Activated CD4-positive, alpha-beta T cell treated with anti-CD3 and anti-CD28 coated beads for 36 hours (primary cell): ENCODE measurements at regions of chr3 and their contacts with region 1.

Region 1: DNA sequence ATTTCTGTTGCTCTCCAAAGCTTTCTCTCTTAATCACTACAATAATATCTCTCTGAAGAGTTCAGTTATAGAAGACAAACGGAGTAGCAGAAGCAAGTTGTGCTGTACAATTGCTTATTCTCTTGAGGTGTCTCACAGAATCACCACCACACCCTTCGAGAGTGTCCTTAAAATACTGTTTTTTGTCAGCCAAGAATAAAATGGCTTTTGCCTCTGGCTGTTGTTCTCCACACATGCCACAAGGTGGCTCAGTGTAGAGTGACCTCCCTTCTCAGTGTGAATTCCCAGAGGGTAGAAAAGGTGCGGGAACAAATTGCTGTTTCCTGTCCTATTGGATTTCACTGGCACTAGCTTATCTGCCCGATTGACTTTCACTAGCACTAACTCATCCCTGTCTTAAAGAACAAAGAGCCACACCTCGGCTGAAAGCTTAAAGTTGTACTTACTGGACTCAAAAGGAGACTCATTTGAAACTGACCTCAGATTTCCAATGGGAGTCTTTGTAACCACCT is 134.2 kb upstream of the SATB1 start:
- DNase-seq: peak; percentile 50
- ATAC-seq: peak; percentile 57
- H3K4me3 Mint-ChIP-seq: peak overlapping the region; percentile 53
- H3K27ac Mint-ChIP-seq: peak overlapping the region; percentile 97
- H3K4me1 Mint-ChIP-seq: peaks cover 74% of the 10 kb centered on the region
- H3K27me3 Mint-ChIP-seq: no peaks in the 10 kb centered on the region

Region 2: GRCh38 chr3:17742108-17742879 is 817.1 kb before region 1 on chr3 and contains the start of gene TBC1D5:
- CTCF ChIA-PET with region 1: no interaction called
- POLR2A ChIA-PET with region 1: no interaction called
- intact Hi-C with region 1: loop called in 1 of 2 experiments (anchors 5 kb)
- DNase-seq: peak; percentile 97
- ATAC-seq: peak; percentile 97
- H3K4me3 Mint-ChIP-seq: peak within 1 kb of the TSS; percentile 93
- H3K27ac Mint-ChIP-seq: peak within 1 kb of the TSS; percentile 93
- H3K4me1 Mint-ChIP-seq: peaks cover 40% of the 10 kb centered on the region
- H3K27me3 Mint-ChIP-seq: no peaks in the 10 kb centered on the region
- total RNA-seq, gene TBC1D5: 53.9 to 56.9 TPM

Region 3: GRCh38 chr3:18307529-18307928 is 251.9 kb before region 1 on chr3:
- CTCF ChIA-PET with region 1: no interaction called
- POLR2A ChIA-PET with region 1: no interaction called
- intact Hi-C with region 1: no loop called
- DNase-seq: no peak
- ATAC-seq: no peak
- H3K4me3 Mint-ChIP-seq: no peak overlapping the region
- H3K27ac Mint-ChIP-seq: no peak overlapping the region
- H3K4me1 Mint-ChIP-seq: no peaks in the 10 kb centered on the region
- H3K27me3 Mint-ChIP-seq: no peaks in the 10 kb centered on the region

Region 4: DNA sequence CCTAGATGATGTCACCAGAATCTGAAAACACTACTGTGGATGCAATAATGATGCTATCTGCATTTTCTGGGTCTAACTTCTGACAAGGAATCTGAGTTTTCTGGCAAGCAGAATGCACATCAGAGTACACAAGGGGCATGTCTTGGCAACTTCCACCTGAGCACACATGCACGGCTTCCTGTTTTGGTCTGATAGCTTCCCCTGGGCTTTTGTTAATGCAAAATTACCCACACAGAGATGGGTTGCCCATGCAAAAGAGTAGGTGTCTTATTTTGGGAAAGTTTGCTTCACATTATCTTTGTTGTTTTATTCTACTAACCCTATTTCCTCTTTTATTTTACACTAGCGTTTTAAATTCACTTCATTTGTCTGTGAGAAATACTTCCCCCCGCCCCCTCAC is 60.1 kb before region 1 on chr3:
- CTCF ChIA-PET with region 1: no interaction called
- POLR2A ChIA-PET with region 1: no interaction called
- intact Hi-C with region 1: loop called (anchors 2 to 10 kb)
- DNase-seq: peak; percentile 15
- ATAC-seq: peak; percentile 51
- H3K4me3 Mint-ChIP-seq: peak overlapping the region; percentile 24
- H3K27ac Mint-ChIP-seq: peak overlapping the region; percentile 69
- H3K4me1 Mint-ChIP-seq: peaks cover 46% of the 10 kb centered on the region
- H3K27me3 Mint-ChIP-seq: no peaks in the 10 kb centered on the region

Region 5: GRCh38 chr3:18657858-18658820 is 98.8 kb after region 1 on chr3:
- CTCF ChIA-PET with region 1: interaction called, 4 read pairs
- POLR2A ChIA-PET with region 1: no interaction called
- intact Hi-C with region 1: loop called in 1 of 2 experiments (anchors 1 kb)
- DNase-seq: peak; percentile 51
- ATAC-seq: peak; percentile 71
- H3K4me3 Mint-ChIP-seq: peak overlapping the region; percentile 52
- H3K27ac Mint-ChIP-seq: peak overlapping the region; percentile 85
- H3K4me1 Mint-ChIP-seq: peaks cover 70% of the 10 kb centered on the region
- H3K27me3 Mint-ChIP-seq: no peaks in the 10 kb centered on the region

Region 6: DNA sequence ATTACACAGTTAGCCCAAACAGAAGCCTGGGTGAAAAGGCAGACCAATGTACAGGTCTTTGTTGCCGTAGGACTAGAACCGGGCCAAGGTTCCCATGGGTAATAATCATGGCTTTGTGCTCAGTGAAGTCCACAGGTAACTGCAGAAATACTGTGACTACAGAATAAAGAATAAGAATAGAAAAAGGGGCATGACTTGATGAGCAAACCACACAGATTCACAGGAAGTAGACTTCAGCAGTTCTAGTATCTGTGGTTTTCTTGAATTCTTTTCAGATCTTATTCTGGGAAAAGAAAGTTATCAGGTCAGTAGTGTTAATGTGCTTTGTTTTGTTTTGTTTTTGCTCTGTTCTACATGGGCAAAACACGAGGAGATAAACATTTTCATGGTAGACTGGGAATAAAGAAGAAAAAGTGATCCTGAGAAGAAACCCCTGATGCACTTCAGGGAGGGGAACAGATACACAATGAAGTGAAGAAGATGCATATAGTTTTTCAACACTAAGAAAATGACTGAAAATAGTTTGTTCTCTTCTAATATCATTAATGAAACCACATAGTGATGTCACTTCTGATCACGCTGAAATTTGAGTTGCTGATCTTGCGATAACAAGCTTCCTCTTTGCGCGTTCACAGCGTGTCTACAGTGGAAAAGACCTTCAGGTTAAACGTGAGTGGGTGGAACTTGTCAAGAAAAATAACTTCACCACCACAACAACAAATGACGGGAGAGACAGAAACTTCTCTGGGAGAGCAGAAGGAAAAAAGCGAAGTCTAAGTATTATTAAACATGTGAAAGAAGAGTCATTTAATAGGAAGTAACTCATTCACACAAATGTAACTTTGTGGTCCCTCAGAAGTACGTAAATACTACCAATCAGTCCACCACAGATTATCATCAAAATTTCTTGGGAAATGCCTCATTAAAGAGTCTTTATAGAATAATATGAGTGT is 181.5 kb after region 1 on chr3:
- CTCF ChIA-PET with region 1: interaction called, 7 read pairs
- POLR2A ChIA-PET with region 1: interaction called, 15 read pairs
- intact Hi-C with region 1: loop called (anchors 1 kb)
- DNase-seq: peak; percentile 76
- ATAC-seq: peak; percentile 36
- H3K4me3 Mint-ChIP-seq: peak overlapping the region; percentile 58
- H3K27ac Mint-ChIP-seq: peak overlapping the region; percentile 94
- H3K4me1 Mint-ChIP-seq: peaks cover 94% of the 10 kb centered on the region
- H3K27me3 Mint-ChIP-seq: no peaks in the 10 kb centered on the region

Region 7: GRCh38 chr3:20054549-20054987 is 1495.2 kb after region 1 on chr3:
- CTCF ChIA-PET with region 1: no interaction called
- POLR2A ChIA-PET with region 1: no interaction called
- intact Hi-C with region 1: loop called in 1 of 2 experiments (anchors 5 kb)
- DNase-seq: peak; percentile 83
- ATAC-seq: peak; percentile 85
- H3K4me3 Mint-ChIP-seq: no peak overlapping the region
- H3K27ac Mint-ChIP-seq: no peak overlapping the region
- H3K4me1 Mint-ChIP-seq: peaks cover 38% of the 10 kb centered on the region
- H3K27me3 Mint-ChIP-seq: no peaks in the 10 kb centered on the region